ENCODE measurements at regions of chr20 and their contacts with region 1.

Region 1: GRCh38 chr20:54078296-54078984 is 8.0 kb upstream of the BCAS1 start:
- DNase-seq: no peak
- H3K4me3 ChIP-seq: no peak overlapping the region
- H3K27ac ChIP-seq: no peak overlapping the region
- H3K4me1 ChIP-seq: peaks cover 0 to 6% (median 0%) of the 10 kb centered on the region in 4 donors
- H3K27me3 ChIP-seq: no peaks in the 10 kb centered on the region
- CTCF ChIP-seq: no peak
- EP300 ChIP-seq: no peak
- POLR2A ChIP-seq: no peak

Region 2: GRCh38 chr20:53216856-53217576 is 861.4 kb before region 1 on chr20:
- in situ Hi-C with region 1: no loop called
- intact Hi-C with region 1: no loop called
- DNase-seq: peak; percentile 70
- H3K4me3 ChIP-seq: peak overlapping the region in 1 of 4 donors; percentile 12
- H3K27ac ChIP-seq: no peak overlapping the region
- H3K4me1 ChIP-seq: peaks cover 0 to 3% (median 0%) of the 10 kb centered on the region in 4 donors
- H3K27me3 ChIP-seq: peaks cover 11% of the 10 kb centered on the region
- CTCF ChIP-seq: peak; percentile 74 to 85 (median 82)
- EP300 ChIP-seq: no peak
- POLR2A ChIP-seq: no peak

Region 3: DNA sequence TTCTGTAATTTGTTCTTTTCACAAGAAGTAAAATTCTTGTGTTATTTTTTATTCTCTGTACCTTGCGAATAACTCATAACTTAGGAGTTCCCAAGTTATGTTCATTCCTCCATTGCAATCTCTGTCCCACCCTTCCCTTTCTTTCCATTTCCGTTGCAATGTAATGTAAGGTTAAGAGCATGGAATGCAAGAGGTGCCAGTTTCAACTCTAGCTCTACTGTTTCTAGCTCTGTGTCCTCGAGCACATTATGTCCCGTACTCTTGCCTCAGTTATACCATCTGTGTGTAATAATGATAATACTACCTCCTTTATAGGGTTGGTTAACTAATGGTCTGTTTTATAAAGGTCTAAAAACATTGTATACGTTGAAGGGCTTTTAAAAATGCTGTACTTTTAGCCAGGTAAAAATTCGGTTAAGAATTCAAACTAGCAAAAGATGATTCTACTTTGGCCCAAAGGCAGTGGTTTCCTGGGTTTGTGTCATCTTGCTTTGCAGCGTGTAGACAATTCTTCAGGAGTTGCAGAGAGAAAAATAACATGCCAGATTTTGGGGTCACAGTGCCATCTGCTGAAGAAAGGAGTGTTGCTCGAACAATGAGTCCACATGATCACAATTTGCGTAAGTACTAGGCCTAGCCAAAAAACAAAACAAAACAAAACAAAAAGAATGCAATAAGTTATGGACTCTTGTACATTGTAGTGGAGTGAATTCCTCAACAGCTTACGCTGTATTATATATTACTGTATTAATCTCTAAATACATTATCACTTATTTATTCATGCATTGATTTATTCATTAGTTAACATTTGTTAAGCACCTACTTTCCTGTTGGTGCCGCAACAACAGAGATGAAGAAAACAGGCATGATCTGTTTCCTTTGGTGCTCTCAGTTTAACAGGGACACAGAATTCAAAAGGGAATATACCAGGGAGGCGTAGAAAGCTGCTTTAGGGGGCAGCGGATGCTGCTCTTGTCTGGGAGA is 119.5 kb after region 1 on chr20:
- in situ Hi-C with region 1: no loop called
- intact Hi-C with region 1: no loop called
- DNase-seq: no peak
- H3K4me3 ChIP-seq: no peak overlapping the region
- H3K27ac ChIP-seq: no peak overlapping the region
- H3K4me1 ChIP-seq: peaks cover 0 to 9% (median 0%) of the 10 kb centered on the region in 4 donors
- H3K27me3 ChIP-seq: no peaks in the 10 kb centered on the region
- CTCF ChIP-seq: no peak
- EP300 ChIP-seq: no peak
- POLR2A ChIP-seq: no peak

Region 4: GRCh38 chr20:54207743-54208547 is 129.5 kb after region 1 on chr20 and contains the start of gene PFDN4:
- in situ Hi-C with region 1: no loop called
- intact Hi-C with region 1: no loop called
- DNase-seq: peak; percentile 88
- H3K4me3 ChIP-seq: peak within 1 kb of the TSS; percentile 84 to 97 (median 92)
- H3K27ac ChIP-seq: peak within 1 kb of the TSS; percentile 91 to 94 (median 92)
- H3K4me1 ChIP-seq: peaks cover 0 to 30% (median 16%) of the 10 kb centered on the region in 4 donors
- H3K27me3 ChIP-seq: no peaks in the 10 kb centered on the region
- CTCF ChIP-seq: peak; percentile 75 to 85 (median 84)
- EP300 ChIP-seq: no peak
- POLR2A ChIP-seq: no peak
- total RNA-seq, gene PFDN4: 4.6 to 73.5 (median 28.5) TPM

Region 5: GRCh38 chr20:54649511-54649962 is 571.1 kb after region 1 on chr20:
- in situ Hi-C with region 1: loop called in 1 of 4 experiments (anchors 25 kb)
- intact Hi-C with region 1: no loop called
- DNase-seq: peak; percentile 77
- H3K4me3 ChIP-seq: no peak overlapping the region
- H3K27ac ChIP-seq: no peak overlapping the region
- H3K4me1 ChIP-seq: no peaks in the 10 kb centered on the region
- H3K27me3 ChIP-seq: peaks cover 7% of the 10 kb centered on the region
- CTCF ChIP-seq: peak; percentile 51 to 79 (median 74)
- EP300 ChIP-seq: no peak
- POLR2A ChIP-seq: no peak